ENCODE measurements at regions of chr2 and their contacts with region 1.

Region 1: GRCh38 chr2:45935791-45936622 is 284.5 kb downstream of the PRKCE start:
- DNase-seq: peak; percentile 88
- H3K4me3 ChIP-seq: no peak overlapping the region
- H3K27ac ChIP-seq: peak overlapping the region in 1 of 2 experiments; percentile 57; a peak in 2 of 4 replicates
- H3K4me1 ChIP-seq: peaks cover 7 to 17% of the 10 kb centered on the region in 2 experiments; a peak in 2 of 4 replicates
- H3K27me3 ChIP-seq: no peaks in the 10 kb centered on the region
- CTCF ChIP-seq: peak; percentile 93
- EP300 ChIP-seq: peak; percentile 8 to 74; a peak in 1 of 4 replicates
- RAD21 ChIP-seq: peak; percentile 99

Region 2: DNA sequence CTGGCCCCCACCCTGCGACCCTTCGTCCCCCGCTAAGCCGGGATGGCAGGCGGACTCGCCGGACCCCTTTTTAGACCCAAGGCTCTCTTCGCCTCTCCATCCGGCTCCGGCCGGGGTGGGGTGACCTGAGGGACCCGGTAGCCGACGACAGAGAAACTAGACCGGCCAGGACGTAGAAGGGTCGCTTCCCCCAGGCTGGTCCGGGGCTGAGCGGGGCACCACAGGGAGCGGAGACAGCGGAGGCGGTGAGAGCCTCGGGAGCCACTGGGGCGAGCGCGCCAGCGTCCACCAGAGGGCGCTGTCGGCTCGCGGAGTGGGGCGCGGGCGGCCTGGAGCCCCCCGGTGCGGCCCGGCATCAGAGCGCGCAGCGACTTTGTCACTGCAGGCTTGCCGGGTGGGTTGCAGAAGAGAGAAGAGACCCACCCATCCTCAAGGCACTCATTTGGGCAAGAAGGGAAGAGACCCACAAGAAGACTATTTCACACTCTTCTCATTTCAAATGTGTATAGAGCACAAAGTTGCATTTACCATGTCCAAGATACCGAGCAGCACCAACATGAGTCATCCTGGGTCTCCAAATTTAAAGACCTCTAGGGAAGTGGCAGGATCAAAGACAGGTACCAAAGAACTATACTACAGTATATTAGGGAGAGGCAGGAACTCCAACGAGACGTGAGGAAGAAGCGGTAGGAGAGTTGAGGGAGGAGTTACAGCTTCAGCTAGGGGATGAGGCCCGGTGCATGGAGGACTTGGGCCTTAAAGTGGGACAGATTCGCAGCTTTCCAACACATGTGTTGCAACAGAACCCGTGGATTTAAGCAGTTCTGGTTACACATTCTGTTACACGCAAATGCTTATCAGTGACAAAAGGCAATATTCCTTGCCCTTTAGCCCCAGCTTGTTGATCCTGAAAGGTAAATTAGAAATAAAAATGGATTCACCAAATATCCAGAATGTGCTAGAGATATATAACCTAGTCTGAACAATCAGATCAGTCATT is 292.2 kb before region 1 on chr2:
- CTCF ChIA-PET with region 1: interaction called, 64 read pairs
- POLR2A ChIA-PET with region 1: no interaction called
- DNase-seq: peak; percentile 98
- H3K4me3 ChIP-seq: peak overlapping the region; percentile 70 to 75
- H3K27ac ChIP-seq: no peak overlapping the region
- H3K4me1 ChIP-seq: peaks cover 0 to 10% of the 10 kb centered on the region in 2 experiments; a peak in 1 of 4 replicates
- H3K27me3 ChIP-seq: peaks cover 12% of the 10 kb centered on the region; the same call in 1 of the 2 replicates
- CTCF ChIP-seq: peak; percentile 92
- EP300 ChIP-seq: no peak
- RAD21 ChIP-seq: peak; percentile 99

Region 3: DNA sequence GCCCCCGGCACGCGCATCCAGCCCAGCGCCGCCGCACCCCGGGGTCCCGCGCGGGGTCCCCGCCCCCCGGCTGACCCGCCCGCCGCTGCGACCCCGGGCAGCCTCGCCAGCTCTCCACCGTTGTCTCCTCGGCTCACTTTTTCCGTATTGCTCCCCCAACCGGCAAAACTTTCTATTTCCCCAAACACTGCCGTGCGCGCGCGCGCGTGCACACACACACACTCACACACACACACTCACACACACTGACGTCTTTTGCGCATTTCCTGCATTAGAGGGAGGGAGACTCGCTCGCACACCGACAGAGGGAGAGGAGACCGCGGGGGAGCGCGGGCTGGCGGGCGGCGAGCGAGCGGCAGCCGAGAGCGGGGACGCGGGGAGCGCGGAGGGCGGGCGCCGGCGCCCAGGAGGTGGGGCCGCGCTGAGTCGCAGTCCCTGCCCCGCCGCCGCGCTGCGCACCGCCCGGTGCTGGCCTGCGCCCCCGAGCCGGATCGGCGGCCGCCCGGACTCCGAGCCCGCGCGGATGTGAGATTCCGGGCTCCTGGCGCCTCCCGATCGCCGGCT is 285.1 kb before region 1 on chr2:
- CTCF ChIA-PET with region 1: interaction called, 64 read pairs
- POLR2A ChIA-PET with region 1: interaction called, 4 read pairs
- DNase-seq: peak; percentile 96
- H3K4me3 ChIP-seq: peak overlapping the region; percentile 87 to 88
- H3K27ac ChIP-seq: peak overlapping the region; percentile 81 to 88
- H3K4me1 ChIP-seq: peaks cover 0 to 30% of the 10 kb centered on the region in 2 experiments; a peak in 2 of 4 replicates
- H3K27me3 ChIP-seq: no peaks in the 10 kb centered on the region
- CTCF ChIP-seq: peak; percentile 55
- EP300 ChIP-seq: peak; percentile 39 to 51; a peak in 3 of 4 replicates
- RAD21 ChIP-seq: peak; percentile 57

Region 4: DNA sequence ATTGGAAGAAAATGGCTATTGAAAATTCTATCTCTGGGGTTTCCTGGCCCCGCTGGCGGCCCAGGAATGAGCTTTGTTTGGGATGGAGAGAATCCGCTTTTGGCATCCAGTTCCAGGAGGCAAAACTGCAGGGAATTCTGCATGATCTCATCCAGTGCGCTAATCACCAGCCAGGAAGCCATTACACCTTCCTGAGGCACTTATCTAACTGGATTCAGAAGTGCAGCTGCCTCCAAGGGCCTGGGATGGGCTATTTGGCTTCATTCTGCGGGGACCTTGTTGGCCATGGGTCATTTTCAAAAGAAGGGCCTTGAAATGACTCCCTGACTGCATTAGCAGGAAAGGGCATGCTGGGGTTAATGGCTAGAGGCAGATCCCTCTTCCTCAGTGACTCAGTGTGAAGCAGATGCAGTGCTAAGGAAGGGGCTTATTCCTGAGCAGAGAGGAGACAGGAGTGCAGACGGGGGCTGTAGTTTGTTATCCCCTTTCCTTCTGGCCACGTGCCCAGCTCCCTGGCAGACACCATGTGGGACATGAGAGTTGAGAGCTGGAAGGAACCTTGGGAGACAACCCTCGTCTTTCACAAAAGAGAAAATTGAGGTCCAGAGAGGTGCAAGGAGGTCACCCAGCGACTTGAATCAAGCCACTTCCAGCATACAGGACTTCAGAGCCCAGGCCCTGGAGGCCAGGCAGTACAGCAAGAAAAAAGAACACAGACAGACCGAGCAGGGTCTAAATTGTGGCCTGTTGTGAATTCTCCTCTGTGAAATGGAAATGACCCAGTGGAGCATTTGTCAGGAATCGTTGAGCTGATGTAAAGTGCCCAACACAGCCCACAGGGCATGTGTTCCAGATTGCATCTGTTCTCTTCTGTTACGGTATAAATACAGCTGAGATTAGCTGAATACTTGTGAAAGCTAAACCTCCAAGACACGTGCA is 122.7 kb before region 1 on chr2:
- CTCF ChIA-PET with region 1: interaction called, 11 read pairs
- POLR2A ChIA-PET with region 1: no interaction called
- DNase-seq: peak; percentile 56
- H3K4me3 ChIP-seq: no peak overlapping the region
- H3K27ac ChIP-seq: peak overlapping the region; percentile 57 to 93
- H3K4me1 ChIP-seq: peaks cover 17 to 49% of the 10 kb centered on the region in 2 experiments
- H3K27me3 ChIP-seq: no peaks in the 10 kb centered on the region
- CTCF ChIP-seq: no peak
- EP300 ChIP-seq: peak in 1 of 2 experiments; percentile 53; a peak in 2 of 4 replicates
- RAD21 ChIP-seq: 0 out of 2 replicates have a peak, but pooled peaks have one; percentile 13

Region 5: DNA sequence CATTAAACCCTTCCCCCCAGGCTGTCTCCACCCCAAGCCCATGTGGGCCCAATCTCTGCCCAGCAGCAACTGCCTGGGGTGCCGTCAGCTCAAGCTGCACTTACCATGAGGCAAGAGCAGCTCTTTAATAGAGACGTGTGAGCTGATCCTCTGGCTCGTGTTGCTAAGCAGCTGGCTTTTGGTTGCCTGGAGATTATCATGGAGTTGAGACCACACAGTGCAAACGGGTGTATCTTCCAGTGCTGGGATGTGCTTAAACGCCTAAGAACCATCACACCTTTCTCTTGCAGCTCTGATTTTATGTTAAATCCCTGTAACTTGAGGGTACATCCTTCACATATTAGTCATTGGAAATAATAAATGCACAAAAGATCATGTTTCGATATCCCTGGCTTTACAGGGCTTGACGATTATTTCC is 13.4 kb before region 1 on chr2:
- CTCF ChIA-PET with region 1: interaction called, 21 read pairs
- POLR2A ChIA-PET with region 1: no interaction called
- DNase-seq: peak; percentile 89
- H3K4me3 ChIP-seq: no peak overlapping the region
- H3K27ac ChIP-seq: peak overlapping the region in 1 of 2 experiments; percentile 74; a peak in 2 of 4 replicates
- H3K4me1 ChIP-seq: peaks cover 5 to 53% of the 10 kb centered on the region in 2 experiments; a peak in 2 of 4 replicates
- H3K27me3 ChIP-seq: no peaks in the 10 kb centered on the region
- CTCF ChIP-seq: no peak
- EP300 ChIP-seq: 0 out of 4 replicates have a peak, but pooled peaks of 1 of the 2 experiments have one; percentile 23
- RAD21 ChIP-seq: 0 out of 2 replicates have a peak, but pooled peaks have one; percentile 7

Region 6: GRCh38 chr2:45951025-45951727 is 15.2 kb after region 1 on chr2:
- CTCF ChIA-PET with region 1: interaction called, 12 read pairs
- POLR2A ChIA-PET with region 1: no interaction called
- DNase-seq: no peak
- H3K4me3 ChIP-seq: no peak overlapping the region
- H3K27ac ChIP-seq: no peak overlapping the region
- H3K4me1 ChIP-seq: peaks cover 8 to 13% of the 10 kb centered on the region in 2 experiments; a peak in 3 of 4 replicates
- H3K27me3 ChIP-seq: no peaks in the 10 kb centered on the region
- CTCF ChIP-seq: no peak
- EP300 ChIP-seq: no peak
- RAD21 ChIP-seq: no peak

Measured in SK-N-SH (cell line).